Right lobe of liver (tissue), 6 donors: ENCODE measurements at regions of chr1 and their contacts with region 1.

Region 1: GRCh38 chr1:56967900-56968832 is 2.4 kb upstream of the C8B start:
- DNase-seq: peak; percentile 78 to 83 (median 78)
- ATAC-seq: peak; percentile 37 to 55 (median 43)
- H3K4me3 ChIP-seq: peak overlapping the region; percentile 7 to 47 (median 42)
- H3K27ac ChIP-seq: peak overlapping the region; percentile 94 to 98 (median 94)
- H3K4me1 ChIP-seq: peaks cover 0 to 22% (median 0%) of the 10 kb centered on the region in 4 donors
- H3K27me3 ChIP-seq: no peaks in the 10 kb centered on the region
- CTCF ChIP-seq: peak; percentile 79 to 88 (median 84)
- POLR2A ChIP-seq: no peak

Region 2: GRCh38 chr1:56469640-56470371 is 498.4 kb before region 1 on chr1:
- intact Hi-C with region 1: no loop called
- DNase-seq: no peak
- ATAC-seq: peak in 3 of 4 donors; percentile 48 to 67 (median 56)
- H3K4me3 ChIP-seq: no peak overlapping the region
- H3K27ac ChIP-seq: peak overlapping the region in 1 of 3 donors; percentile 7
- H3K4me1 ChIP-seq: peaks cover 0 to 29% (median 10%) of the 10 kb centered on the region in 4 donors
- H3K27me3 ChIP-seq: no peaks in the 10 kb centered on the region
- CTCF ChIP-seq: no peak
- POLR2A ChIP-seq: no peak

Region 3: GRCh38 chr1:56911098-56911938 is 56.8 kb before region 1 on chr1:
- intact Hi-C with region 1: loop called in 1 of 2 experiments (anchors 5 kb)
- DNase-seq: peak in 1 of 3 donors; percentile 68
- ATAC-seq: peak; percentile 44 to 64 (median 54)
- H3K4me3 ChIP-seq: no peak overlapping the region
- H3K27ac ChIP-seq: peak overlapping the region; percentile 81 to 97 (median 83)
- H3K4me1 ChIP-seq: peaks cover 4 to 76% (median 39%) of the 10 kb centered on the region in 4 donors
- H3K27me3 ChIP-seq: no peaks in the 10 kb centered on the region
- CTCF ChIP-seq: no peak
- POLR2A ChIP-seq: peak; percentile 75

Region 4: GRCh38 chr1:57300186-57300585 is 332.0 kb after region 1 on chr1:
- intact Hi-C with region 1: no loop called
- DNase-seq: no peak
- ATAC-seq: no peak
- H3K4me3 ChIP-seq: no peak overlapping the region
- H3K27ac ChIP-seq: no peak overlapping the region
- H3K4me1 ChIP-seq: no peaks in the 10 kb centered on the region
- H3K27me3 ChIP-seq: no peaks in the 10 kb centered on the region
- CTCF ChIP-seq: no peak
- POLR2A ChIP-seq: no peak